Breast epithelium (tissue), 4 donors: ENCODE measurements at regions of chr5 and their contacts with region 1.

Region 1: DNA sequence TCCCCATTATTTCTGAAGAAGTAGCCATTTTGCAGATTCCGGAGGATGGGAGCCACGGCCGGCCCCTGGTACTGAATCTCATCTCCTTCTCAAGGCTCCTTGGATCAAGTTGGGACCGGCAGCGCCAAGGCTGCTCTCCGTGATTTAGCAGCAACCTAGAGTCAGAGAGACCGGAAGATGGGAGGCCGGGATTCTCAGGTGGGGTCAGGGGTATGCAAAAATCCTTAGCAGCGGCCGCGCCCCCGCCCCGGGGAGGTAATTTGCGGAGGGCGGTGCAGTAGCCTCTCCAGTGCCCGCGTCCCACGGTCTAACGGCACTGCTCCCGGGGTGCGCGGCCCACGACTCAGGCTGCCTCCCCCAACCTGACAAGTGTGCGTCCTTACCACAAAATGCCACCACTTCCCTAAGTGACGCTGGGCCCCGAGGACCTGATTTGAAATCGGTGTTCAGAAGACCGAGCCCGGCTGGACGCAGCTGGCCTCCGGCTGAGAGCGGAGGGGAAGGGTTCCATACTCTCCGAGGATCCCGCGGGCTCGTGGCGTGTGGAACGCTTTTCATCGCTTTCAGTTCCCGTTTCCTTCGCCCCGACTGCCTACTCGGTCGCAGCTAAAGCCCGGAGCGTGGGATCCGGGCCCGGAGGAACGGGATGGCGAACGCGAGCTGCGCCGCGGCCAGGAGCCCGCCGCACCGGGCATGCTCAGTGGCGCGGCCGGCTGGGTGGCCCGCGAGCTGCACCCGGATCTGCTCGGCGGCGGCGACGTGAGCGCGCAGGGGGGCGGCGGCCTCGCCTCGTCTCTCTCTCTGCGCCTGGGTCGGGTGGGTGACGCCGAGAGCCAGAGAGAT is at the start of gene SCAMP1:
- DNase-seq: peak; percentile 87 to 89
- H3K4me3 ChIP-seq: peak within 1 kb of the TSS; percentile 69 to 99 (median 84)
- H3K27ac ChIP-seq: peak within 1 kb of the TSS; percentile 94 to 98
- H3K4me1 ChIP-seq: peaks cover 0 to 12% of the 10 kb centered on the region in 2 donors
- H3K27me3 ChIP-seq: no peaks in the 10 kb centered on the region
- CTCF ChIP-seq: peak in 2 of 3 donors; percentile 9 to 59
- POLR2A ChIP-seq: peak; percentile 19
- total RNA-seq, gene SCAMP1: 31.2 to 52.0 (median 31.8) TPM

Region 2: GRCh38 chr5:78300464-78301045 is 59.5 kb before region 1 on chr5:
- intact Hi-C with region 1: loop called (anchors 10 kb)
- DNase-seq: no peak
- H3K4me3 ChIP-seq: no peak overlapping the region
- H3K27ac ChIP-seq: no peak overlapping the region
- H3K4me1 ChIP-seq: no peaks in the 10 kb centered on the region
- H3K27me3 ChIP-seq: no peaks in the 10 kb centered on the region
- CTCF ChIP-seq: no peak
- POLR2A ChIP-seq: no peak

Region 3: DNA sequence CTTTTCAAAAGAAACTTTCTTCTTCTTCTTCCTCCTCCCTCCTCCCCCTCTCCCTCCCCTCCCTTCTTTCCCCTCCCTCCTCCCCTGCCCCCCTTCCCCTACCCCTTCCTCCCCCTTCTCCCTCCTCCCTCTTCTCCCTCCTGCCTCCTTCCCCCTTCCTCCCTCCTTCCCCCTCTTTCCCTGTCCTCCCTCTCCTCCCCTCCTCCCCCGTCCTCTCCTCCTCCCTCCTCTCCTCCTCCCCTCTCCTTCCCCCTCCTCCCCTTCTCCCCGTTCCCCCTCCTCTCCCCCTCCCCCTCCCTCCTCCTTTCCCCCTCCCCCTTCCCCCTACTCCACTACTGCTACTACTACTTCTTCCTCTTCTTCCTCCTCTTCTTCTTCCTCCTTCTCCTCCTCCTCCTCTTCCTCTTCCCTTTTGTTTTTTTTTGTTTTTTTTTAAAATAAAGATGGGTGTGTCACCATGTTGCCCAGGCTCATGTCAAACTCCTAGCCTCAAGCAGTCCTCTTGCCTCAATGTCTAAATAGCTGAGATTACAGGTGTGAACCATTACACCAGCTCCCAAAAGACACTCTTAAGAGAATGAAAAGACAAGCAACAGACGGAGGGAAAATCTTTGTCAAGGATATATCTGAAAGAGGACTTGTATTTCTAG is 87.8 kb after region 1 on chr5:
- intact Hi-C with region 1: no loop called
- DNase-seq: no peak
- H3K4me3 ChIP-seq: no peak overlapping the region
- H3K27ac ChIP-seq: no peak overlapping the region
- H3K4me1 ChIP-seq: no peaks in the 10 kb centered on the region
- H3K27me3 ChIP-seq: no peaks in the 10 kb centered on the region
- CTCF ChIP-seq: no peak
- POLR2A ChIP-seq: no peak

Region 4: DNA sequence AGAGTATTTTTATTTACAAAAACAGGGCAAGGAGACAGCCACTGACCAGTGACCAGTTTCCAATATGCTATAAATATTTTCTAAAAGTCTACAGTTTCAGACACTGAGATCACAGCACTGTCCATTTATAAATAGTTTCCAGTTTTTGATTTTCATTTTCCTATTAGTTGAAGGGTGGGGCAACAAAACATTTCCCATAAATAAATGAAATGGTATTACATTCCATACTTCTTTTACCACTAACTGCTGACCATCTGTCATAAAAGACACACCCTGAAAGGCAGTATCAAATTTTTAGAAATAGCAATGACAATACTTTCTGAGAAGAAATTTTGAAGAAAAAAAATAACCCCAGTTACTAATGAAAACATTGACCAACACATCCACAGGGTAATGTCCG is 498.3 kb after region 1 on chr5:
- intact Hi-C with region 1: no loop called
- DNase-seq: no peak
- H3K4me3 ChIP-seq: no peak overlapping the region
- H3K27ac ChIP-seq: no peak overlapping the region
- H3K4me1 ChIP-seq: no peaks in the 10 kb centered on the region
- H3K27me3 ChIP-seq: no peaks in the 10 kb centered on the region
- CTCF ChIP-seq: no peak
- POLR2A ChIP-seq: no peak